ENCODE measurements at regions of chr14 and their contacts with region 1.

Region 1: DNA sequence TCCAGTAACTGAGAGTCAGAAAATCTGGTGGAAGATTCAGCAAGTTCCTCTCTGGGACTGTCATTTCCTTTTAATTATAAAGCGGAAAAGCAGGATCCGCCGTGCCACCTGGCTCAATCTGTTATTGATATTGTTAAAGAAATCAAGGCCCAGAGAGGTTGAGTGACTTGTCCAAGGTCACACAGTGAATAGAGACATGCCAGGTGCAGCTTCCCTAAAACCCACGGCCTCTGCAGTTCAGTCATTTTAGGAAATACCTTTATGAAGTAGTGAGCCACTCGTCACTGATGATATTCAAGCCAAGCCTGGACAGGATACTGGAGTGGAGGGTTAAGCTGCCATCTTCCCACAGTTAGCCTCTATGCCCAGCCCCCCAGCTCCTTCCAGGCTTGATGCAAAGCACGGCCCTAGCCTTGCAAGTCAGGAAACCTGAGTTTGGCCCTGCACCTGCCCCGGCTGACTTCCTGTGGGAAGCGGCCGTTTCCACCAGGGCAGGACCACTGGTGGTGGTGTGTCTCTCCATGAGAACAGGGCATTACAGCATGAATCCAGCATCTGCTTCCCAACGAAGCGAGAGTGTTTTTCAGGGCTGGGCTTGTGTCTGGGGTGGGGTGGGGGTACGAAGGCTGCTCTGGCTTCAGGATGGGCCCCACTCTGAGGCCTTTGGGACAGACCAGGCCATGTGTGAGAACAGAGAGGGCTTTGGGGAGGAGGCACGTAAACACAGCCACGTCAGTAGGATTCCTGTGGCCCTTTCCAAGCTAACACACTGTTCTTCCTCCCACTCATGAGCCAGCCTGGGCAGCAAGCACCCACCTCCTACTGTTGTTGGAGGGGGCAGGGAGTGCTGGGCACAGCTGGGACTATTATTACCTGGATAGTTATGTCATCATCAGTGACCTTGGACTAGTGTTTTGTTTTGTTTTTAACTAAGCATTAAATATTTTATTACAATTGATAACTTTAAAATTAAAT is 5.0 kb downstream of the CHGA start:
- DNase-seq: no peak
- H3K4me3 ChIP-seq: no peak overlapping the region
- H3K27ac ChIP-seq: no peak overlapping the region
- H3K4me1 ChIP-seq: no peaks in the 10 kb centered on the region
- H3K27me3 ChIP-seq: peaks cover 13% of the 10 kb centered on the region
- CTCF ChIP-seq: no peak
- EP300 ChIP-seq: no peak
- POLR2A ChIP-seq: no peak

Region 2: GRCh38 chr14:92719890-92720323 is 208.0 kb before region 1 on chr14:
- in situ Hi-C with region 1: no loop called
- intact Hi-C with region 1: no loop called
- DNase-seq: peak; percentile 81
- H3K4me3 ChIP-seq: no peak overlapping the region
- H3K27ac ChIP-seq: peak overlapping the region; percentile 76 to 86 (median 82)
- H3K4me1 ChIP-seq: peaks cover 17 to 49% (median 19%) of the 10 kb centered on the region in 4 donors
- H3K27me3 ChIP-seq: no peaks in the 10 kb centered on the region
- CTCF ChIP-seq: no peak
- EP300 ChIP-seq: peak; percentile 8
- POLR2A ChIP-seq: no peak

Region 3: DNA sequence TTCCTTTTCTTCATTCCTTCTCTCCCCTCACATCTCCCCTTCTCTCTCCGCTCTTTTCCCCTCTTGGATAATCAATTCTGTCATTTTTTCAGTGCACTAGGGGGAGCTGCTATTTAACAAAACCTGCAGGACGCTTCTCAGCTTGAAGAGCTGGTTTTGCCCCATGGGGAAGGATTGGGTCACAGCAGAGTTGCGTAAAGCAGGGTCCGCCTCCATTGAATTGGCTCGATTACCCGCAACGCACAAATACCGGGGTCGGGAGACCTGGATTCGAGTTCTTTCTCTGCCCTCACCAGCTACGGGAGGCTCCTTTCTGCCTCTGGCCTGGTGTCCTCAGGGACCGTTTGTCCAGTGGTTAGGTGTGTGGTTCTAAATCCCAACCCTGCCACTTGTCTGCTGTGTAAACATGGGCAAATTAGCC is 47.1 kb before region 1 on chr14:
- in situ Hi-C with region 1: no loop called
- intact Hi-C with region 1: no loop called
- DNase-seq: no peak
- H3K4me3 ChIP-seq: no peak overlapping the region
- H3K27ac ChIP-seq: no peak overlapping the region
- H3K4me1 ChIP-seq: peaks cover 0 to 7% (median 0%) of the 10 kb centered on the region in 4 donors
- H3K27me3 ChIP-seq: peaks cover 53% of the 10 kb centered on the region
- CTCF ChIP-seq: no peak
- EP300 ChIP-seq: no peak
- POLR2A ChIP-seq: no peak

Region 4: DNA sequence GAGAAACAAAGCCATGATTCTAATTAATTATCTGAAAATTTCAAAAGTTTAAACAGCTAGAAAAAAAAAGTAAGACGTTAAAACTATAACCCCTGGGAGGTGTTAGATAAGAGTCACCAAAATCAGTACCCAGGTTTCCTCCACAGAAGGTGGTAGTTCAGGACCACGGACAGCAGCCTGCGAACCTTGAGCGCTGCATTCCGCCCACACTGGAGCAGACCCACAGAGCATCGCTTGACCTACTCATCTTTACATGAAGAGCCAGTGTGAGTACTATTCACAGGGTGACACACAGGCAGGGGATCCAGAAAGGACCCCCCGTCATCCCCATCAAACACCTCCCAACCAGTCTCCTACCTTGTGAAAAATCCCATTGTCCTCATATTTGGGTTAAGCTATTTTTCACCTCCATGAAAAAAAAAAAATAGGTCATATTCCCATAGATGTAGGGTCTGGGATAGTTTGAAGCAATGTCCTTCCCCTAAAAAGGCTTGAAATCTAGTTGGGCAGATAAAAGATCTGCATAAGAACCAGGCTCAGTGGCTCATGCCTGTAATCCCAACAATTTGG is 13.8 kb before region 1 on chr14:
- in situ Hi-C with region 1: no loop called
- intact Hi-C with region 1: loop called (anchors 1 kb)
- DNase-seq: no peak
- H3K4me3 ChIP-seq: no peak overlapping the region
- H3K27ac ChIP-seq: no peak overlapping the region
- H3K4me1 ChIP-seq: no peaks in the 10 kb centered on the region
- H3K27me3 ChIP-seq: peaks cover 2% of the 10 kb centered on the region
- CTCF ChIP-seq: no peak
- EP300 ChIP-seq: no peak
- POLR2A ChIP-seq: no peak

Region 5: DNA sequence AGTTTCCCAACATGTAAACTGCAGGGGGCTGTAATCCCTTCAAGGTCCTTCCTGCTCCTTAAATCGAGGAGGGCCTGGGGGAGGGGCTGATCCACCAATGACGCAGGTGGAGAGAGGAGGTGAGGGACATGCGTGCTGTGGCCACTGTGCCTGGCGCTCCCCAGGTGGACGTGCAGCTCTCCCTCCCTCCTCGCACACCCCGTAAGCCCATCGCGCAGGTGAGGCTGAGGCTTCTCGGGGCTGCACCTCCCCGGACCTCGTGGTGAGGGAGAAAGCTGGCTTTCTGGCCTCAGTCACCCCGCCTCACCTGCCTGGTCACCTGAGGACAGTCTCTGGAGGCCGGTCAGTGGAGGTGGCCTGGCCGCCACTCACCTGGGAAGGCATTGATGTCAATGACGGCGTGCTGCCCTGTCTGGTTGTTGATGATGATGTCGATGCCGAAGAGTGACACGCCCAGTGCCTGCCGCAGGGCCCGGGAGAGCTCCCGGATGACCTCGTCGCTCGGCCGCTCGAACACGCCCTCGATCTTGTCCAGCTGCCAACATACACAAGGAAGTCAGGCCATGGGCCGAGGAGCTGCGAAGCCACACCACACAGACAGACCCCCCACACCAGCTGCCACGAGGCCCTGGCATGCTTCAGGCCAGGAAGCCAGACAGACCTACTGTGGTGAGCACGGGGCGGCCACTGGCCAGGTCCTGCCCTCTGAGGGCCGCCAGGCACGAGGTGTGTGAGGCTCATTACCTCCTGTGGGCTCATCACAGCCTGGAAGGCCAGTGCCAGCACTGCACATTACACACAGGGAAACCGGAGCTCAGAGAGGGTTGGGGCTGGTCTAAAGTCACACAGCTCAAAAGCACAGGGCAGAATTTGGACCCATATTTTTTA is 18.3 kb after region 1 on chr14:
- in situ Hi-C with region 1: no loop called
- intact Hi-C with region 1: no loop called
- DNase-seq: peak; percentile 88
- H3K4me3 ChIP-seq: no peak overlapping the region
- H3K27ac ChIP-seq: peak overlapping the region in 3 of 4 donors; percentile 39 to 45 (median 43)
- H3K4me1 ChIP-seq: peaks cover 0 to 7% (median 4%) of the 10 kb centered on the region in 4 donors
- H3K27me3 ChIP-seq: no peaks in the 10 kb centered on the region
- CTCF ChIP-seq: no peak
- EP300 ChIP-seq: no peak
- POLR2A ChIP-seq: no peak

Measured in transverse colon (tissue), 4 donors.